Sigmoid colon (tissue), 7 donors: ENCODE measurements at regions of chr3 and their contacts with region 1.

Region 1: DNA sequence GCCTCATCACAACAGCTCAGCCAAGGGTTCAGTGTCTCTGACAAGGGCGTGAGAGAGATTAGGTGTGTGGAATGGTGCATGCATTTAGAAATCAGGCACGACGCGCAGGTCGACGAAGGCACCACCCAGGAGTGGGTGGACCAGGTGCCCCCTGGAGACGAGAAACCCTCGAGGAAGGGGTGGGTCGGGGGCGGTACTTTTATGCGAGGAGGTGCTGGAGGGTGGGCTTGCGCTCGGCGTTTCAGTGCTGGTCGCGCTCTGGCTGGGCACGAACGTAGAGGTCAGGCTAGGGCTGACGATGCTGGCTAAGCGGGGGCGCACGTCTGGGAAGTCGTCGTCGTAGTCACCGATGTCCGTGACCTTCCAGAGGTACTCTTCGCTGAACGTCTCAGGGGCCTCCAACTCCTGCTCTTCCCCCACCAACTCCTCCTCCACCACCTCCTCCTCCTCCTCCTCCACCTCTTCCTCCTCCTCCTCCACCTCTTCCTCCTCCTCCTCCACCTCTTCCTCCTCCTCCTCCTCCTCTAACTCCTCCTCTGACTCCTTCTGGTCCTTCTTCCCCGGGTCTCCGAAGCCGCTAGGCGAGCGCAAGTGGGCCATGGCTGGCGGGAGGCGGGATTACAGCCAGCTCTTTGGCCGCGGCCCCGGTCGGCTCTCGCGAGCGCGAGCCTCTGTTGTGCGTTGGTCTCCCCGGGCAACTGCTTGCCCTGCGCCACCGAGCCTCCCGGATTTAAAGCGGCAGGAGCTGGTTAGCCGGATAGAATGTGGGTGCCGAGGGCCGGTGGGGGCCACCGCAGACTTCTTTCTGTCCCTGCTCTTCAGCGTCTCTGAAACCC is at the start of gene ERICH6:
- DNase-seq: peak; percentile 95
- H3K4me3 ChIP-seq: peak within 1 kb of the TSS; percentile 55 to 61 (median 56)
- H3K27ac ChIP-seq: peak within 1 kb of the TSS; percentile 76 to 80 (median 79)
- H3K4me1 ChIP-seq: peaks cover 0 to 15% (median 6%) of the 10 kb centered on the region in 4 donors
- H3K27me3 ChIP-seq: no peaks in the 10 kb centered on the region
- CTCF ChIP-seq: peak in 2 of 4 experiments; percentile 19 to 44
- EP300 ChIP-seq: no peak
- POLR2A ChIP-seq: peak in 1 of 2 donors; percentile 19
- total RNA-seq, gene ERICH6: not detected

Region 2: DNA sequence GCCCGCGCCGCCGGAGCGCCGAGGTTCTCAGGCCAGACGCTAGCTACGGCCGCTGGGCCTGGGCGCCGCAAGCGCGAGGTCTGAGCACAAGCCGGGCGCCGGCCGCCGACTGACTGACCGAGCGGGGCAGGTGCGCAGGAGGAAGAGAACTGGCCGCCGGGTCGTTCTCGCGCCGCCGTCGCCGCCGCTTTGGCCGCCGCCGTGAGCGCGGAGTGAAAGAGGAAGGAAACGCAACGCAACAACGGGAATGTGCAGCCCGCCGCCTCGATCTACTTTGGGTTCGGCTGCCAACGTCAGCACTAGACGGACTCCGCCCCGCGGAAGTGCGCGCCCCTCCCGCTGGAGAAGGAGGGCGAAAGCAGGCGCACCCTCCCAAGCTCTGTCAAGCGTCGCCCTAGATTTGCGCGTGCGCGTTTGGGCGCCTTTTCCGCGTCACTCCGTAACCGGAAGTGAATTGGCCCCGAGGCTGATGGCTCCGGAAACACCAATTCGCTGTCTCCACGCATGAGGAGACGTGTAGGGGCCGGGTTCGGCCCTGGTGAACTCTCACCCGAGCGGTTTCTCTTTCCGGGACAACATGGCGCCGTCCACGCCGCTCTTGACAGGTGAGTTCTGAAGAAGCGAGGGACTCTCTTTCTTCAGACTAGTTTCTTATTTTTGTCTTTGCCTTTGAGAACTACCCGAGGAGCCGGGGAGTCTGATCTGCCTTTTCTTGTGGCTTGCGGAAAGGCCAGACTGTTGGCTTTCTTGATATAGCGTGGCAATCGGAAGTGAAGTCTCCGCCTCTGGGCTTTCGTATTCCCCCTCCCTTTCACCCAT is 157.1 kb before region 1 on chr3 and contains the starts of genes EIF2A and SERP1:
- intact Hi-C with region 1: loop called (anchors 5 kb)
- DNase-seq: peak; percentile 99
- H3K4me3 ChIP-seq: peak within 1 kb of the TSS; percentile 67 to 84 (median 74)
- H3K27ac ChIP-seq: peak within 1 kb of the TSS; percentile 96 to 99 (median 98)
- H3K4me1 ChIP-seq: peaks cover 0 to 44% (median 32%) of the 10 kb centered on the region in 4 donors
- H3K27me3 ChIP-seq: no peaks in the 10 kb centered on the region
- CTCF ChIP-seq: no peak
- EP300 ChIP-seq: peak in 1 of 4 donors; percentile 88
- POLR2A ChIP-seq: peak; percentile 95 to 96
- total RNA-seq, gene EIF2A: 147 to 228 (median 160) TPM
- total RNA-seq, gene SERP1: 140 to 197 (median 185) TPM